WTC11 (cell line): ENCODE measurements at regions of chr14 and their contacts with region 1.

Region 1: DNA sequence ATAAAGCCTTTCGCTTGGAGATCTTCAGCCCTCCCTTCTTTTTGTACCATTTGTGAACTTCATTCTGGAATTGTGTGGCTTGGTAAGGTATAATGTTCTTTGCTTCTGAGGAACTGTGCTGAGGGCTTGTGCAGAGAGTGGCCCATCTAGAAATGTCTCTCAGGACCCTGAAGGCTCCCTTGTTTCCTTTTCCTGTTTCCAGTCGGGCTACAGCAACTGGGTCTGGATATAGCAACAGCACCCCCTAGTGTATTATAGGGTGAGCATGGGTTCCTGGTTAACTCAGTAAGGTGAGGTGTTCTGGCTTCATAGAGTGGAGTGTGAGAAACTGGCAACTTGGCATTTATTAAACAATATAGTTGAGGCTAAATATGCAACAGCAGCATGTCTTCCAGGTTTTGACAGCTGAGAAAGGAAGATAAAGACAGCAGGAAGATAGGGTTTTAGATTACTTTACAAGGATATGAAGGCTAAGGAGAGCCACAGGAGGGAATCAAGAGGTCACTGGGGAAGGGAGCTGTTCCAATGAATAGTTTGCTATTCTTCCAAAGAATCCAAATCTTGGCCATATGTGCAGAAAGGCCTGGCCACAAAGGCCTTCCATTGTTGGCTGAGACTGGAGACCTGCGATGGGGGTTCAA is 49.1 kb upstream of the RNU6-8 start:
- DNase-seq: peak; percentile 37
- ATAC-seq: peak; percentile 86
- H3K4me3 Mint-ChIP-seq: no peak overlapping the region
- H3K27ac Mint-ChIP-seq: no peak overlapping the region
- H3K4me1 Mint-ChIP-seq: no peaks in the 10 kb centered on the region
- H3K27me3 Mint-ChIP-seq: no peaks in the 10 kb centered on the region
- CTCF ChIP-seq: peak; percentile 66

Region 2: GRCh38 chr14:31926123-31926522 is 326.0 kb before region 1 on chr14:
- CTCF ChIA-PET with region 1: interaction called, 14 read pairs
- POLR2A ChIA-PET with region 1: no interaction called
- DNase-seq: no peak
- ATAC-seq: peak; percentile 55; the same call in 1 of the 2 replicates
- H3K4me3 Mint-ChIP-seq: no peak overlapping the region
- H3K27ac Mint-ChIP-seq: no peak overlapping the region
- H3K4me1 Mint-ChIP-seq: peaks cover 8% of the 10 kb centered on the region
- H3K27me3 Mint-ChIP-seq: no peaks in the 10 kb centered on the region
- CTCF ChIP-seq: peak; percentile 41

Region 3: DNA sequence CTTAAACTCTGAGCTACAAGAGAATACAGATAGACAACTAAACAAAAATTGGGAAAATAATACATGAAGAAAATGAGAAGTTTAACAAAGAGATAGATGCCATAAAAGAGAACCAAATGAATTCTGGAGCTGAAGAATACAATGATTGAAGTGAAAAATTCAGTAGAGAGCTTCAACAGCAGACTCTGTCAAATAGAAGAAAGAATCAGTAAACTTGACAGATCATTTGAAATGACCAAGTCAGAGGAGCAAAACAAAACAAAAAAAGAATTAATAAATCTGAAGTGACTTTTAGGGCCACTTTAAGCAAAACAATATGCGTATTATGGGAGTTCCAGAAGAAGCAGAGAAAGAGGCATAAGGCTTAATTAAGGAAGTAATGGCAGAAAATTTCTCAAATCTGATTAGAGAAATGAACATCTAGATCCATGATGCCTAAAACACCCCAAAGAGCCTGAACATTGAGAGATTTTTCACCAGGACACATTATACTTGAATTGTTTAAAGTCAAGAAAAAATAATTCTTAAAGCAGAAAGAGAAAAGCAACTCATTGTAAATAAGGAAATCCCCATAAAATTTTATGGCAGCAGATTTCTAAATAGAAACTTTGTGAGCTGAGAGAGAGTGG is 11.9 kb after region 1 on chr14:
- CTCF ChIA-PET with region 1: no interaction called
- POLR2A ChIA-PET with region 1: no interaction called
- DNase-seq: no peak
- ATAC-seq: no peak
- H3K4me3 Mint-ChIP-seq: no peak overlapping the region
- H3K27ac Mint-ChIP-seq: no peak overlapping the region
- H3K4me1 Mint-ChIP-seq: peaks cover 11% of the 10 kb centered on the region
- H3K27me3 Mint-ChIP-seq: no peaks in the 10 kb centered on the region; the same call in 1 of the 2 replicates
- CTCF ChIP-seq: no peak

Region 4: DNA sequence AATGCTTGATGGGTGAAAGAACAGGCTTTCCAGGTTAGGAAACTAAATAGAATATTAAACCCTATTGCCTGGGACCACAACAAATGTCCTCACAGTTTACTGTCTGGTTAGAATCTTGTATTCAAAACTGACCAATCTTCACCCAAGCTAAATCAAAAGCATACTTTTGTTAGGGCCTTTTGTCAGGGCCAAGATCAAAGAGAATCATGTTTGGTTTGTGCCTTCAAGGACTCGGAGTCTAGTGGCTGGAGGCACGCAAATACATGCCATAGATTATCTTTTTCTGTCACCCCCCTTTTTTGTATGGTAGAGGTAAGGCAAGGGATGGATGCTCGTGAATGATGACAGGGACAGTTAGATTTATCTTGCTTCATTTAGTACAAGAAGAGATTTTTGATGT is 25.8 kb after region 1 on chr14:
- CTCF ChIA-PET with region 1: no interaction called
- POLR2A ChIA-PET with region 1: no interaction called
- DNase-seq: no peak
- ATAC-seq: no peak
- H3K4me3 Mint-ChIP-seq: no peak overlapping the region
- H3K27ac Mint-ChIP-seq: no peak overlapping the region
- H3K4me1 Mint-ChIP-seq: peaks cover 6% of the 10 kb centered on the region; the same call in 1 of the 2 replicates
- H3K27me3 Mint-ChIP-seq: no peaks in the 10 kb centered on the region
- CTCF ChIP-seq: no peak

Region 5: GRCh38 chr14:32382704-32383103 is 130.6 kb after region 1 on chr14:
- CTCF ChIA-PET with region 1: interaction called, 26 read pairs
- POLR2A ChIA-PET with region 1: interaction called, 3 read pairs
- DNase-seq: peak; percentile 27
- ATAC-seq: peak; percentile 92
- H3K4me3 Mint-ChIP-seq: no peak overlapping the region
- H3K27ac Mint-ChIP-seq: no peak overlapping the region
- H3K4me1 Mint-ChIP-seq: peaks cover 7% of the 10 kb centered on the region
- H3K27me3 Mint-ChIP-seq: no peaks in the 10 kb centered on the region
- CTCF ChIP-seq: no peak

Region 6: GRCh38 chr14:32397861-32398640 is 145.9 kb after region 1 on chr14:
- CTCF ChIA-PET with region 1: no interaction called
- POLR2A ChIA-PET with region 1: no interaction called
- DNase-seq: no peak
- ATAC-seq: no peak
- H3K4me3 Mint-ChIP-seq: no peak overlapping the region
- H3K27ac Mint-ChIP-seq: no peak overlapping the region
- H3K4me1 Mint-ChIP-seq: peaks cover 29% of the 10 kb centered on the region
- H3K27me3 Mint-ChIP-seq: no peaks in the 10 kb centered on the region
- CTCF ChIP-seq: no peak

Region 7: DNA sequence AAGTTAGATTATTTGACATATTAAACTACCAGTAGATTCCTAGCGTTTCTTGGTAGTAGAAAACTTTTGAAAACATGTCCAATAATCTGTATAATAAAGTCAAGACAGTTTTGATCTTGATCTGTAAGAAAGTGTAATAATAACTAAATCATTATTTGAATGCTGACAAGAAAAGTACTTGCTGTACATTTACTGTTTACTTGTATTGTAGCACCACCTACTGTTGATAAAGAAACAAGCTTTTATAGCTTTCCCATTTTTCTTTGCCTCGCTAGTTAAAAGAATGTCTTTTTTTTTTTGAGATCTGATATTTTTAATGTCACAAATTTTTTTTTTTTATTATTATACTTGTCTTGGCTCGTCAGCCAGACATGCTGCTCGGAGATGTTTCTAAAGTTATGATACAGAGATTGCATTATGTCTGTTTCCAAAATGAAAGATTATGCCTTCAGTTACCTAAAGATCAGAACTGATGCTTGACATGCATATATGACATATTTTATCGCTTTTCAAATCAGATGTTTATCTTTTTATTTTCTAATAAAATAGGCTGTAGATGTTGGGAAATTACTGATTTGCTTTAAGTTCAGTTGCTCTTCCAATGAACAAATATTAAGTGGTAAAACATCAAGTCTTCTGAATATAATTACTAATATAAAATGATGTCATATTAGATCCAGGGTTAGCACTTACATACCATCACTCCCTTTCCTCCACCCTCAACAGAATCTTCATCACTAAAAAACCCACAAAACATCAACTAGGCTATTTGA is 217.4 kb after region 1 on chr14:
- CTCF ChIA-PET with region 1: interaction called, 18 read pairs
- POLR2A ChIA-PET with region 1: no interaction called
- DNase-seq: no peak
- ATAC-seq: no peak
- H3K4me3 Mint-ChIP-seq: no peak overlapping the region
- H3K27ac Mint-ChIP-seq: no peak overlapping the region
- H3K4me1 Mint-ChIP-seq: peaks cover 32% of the 10 kb centered on the region
- H3K27me3 Mint-ChIP-seq: no peaks in the 10 kb centered on the region
- CTCF ChIP-seq: no peak

Region 8: GRCh38 chr14:32560209-32560857 is 308.2 kb after region 1 on chr14:
- CTCF ChIA-PET with region 1: interaction called, 16 read pairs
- POLR2A ChIA-PET with region 1: no interaction called
- DNase-seq: peak; percentile 51
- ATAC-seq: peak; percentile 91
- H3K4me3 Mint-ChIP-seq: no peak overlapping the region
- H3K27ac Mint-ChIP-seq: no peak overlapping the region
- H3K4me1 Mint-ChIP-seq: no peaks in the 10 kb centered on the region
- H3K27me3 Mint-ChIP-seq: no peaks in the 10 kb centered on the region
- CTCF ChIP-seq: peak; percentile 66